OCI-LY7 (cell line): ENCODE measurements at regions of chr2 and their contacts with region 1.

Region 1: GRCh38 chr2:38377050-38377828 is at the start of gene ATL2:
- DNase-seq: peak; percentile 96
- H3K4me3 ChIP-seq: peak within 1 kb of the TSS; percentile 88
- H3K27ac ChIP-seq: peak within 1 kb of the TSS; percentile 69
- H3K4me1 ChIP-seq: peaks cover 65% of the 10 kb centered on the region
- CTCF ChIP-seq: no peak
- total RNA-seq, gene ATL2: 142 and 166 TPM in 2 replicates

Region 2: DNA sequence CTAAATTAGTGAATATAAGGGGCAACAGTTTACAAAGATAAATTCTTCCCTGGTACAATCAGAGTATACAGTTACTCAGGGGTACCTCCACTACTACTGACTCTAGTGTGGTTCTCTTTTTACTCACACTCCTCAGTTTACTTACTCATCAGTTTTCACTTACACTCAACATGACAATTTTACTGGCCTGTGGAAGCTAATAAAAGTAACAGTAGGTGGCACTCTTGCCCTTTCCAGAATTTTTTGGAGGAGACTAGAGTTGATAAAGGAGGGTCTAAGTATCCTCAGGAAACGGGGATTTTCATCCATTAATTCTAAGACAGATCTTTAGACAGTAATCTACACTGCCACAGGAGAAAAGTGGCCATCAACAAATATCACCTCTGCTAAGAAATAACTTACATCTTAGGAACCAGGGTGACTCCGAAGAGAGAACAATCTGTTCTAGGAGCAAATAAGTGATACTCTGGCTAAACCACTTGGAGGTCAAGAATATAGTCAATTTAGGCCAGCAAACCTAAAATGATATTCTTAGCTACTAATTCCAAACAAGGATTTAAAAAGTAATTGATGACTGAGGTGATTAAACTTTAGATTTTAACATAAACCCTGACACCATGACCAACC is 61.4 kb before region 1 on chr2:
- CTCF ChIA-PET with region 1: no interaction called
- POLR2A ChIA-PET with region 1: interaction called, 6 read pairs
- intact Hi-C with region 1: loop called (anchors 2 kb)
- DNase-seq: peak; percentile 63
- H3K4me3 ChIP-seq: no peak overlapping the region
- H3K27ac ChIP-seq: no peak overlapping the region
- H3K4me1 ChIP-seq: no peaks in the 10 kb centered on the region
- CTCF ChIP-seq: peak; percentile 91

Region 3: DNA sequence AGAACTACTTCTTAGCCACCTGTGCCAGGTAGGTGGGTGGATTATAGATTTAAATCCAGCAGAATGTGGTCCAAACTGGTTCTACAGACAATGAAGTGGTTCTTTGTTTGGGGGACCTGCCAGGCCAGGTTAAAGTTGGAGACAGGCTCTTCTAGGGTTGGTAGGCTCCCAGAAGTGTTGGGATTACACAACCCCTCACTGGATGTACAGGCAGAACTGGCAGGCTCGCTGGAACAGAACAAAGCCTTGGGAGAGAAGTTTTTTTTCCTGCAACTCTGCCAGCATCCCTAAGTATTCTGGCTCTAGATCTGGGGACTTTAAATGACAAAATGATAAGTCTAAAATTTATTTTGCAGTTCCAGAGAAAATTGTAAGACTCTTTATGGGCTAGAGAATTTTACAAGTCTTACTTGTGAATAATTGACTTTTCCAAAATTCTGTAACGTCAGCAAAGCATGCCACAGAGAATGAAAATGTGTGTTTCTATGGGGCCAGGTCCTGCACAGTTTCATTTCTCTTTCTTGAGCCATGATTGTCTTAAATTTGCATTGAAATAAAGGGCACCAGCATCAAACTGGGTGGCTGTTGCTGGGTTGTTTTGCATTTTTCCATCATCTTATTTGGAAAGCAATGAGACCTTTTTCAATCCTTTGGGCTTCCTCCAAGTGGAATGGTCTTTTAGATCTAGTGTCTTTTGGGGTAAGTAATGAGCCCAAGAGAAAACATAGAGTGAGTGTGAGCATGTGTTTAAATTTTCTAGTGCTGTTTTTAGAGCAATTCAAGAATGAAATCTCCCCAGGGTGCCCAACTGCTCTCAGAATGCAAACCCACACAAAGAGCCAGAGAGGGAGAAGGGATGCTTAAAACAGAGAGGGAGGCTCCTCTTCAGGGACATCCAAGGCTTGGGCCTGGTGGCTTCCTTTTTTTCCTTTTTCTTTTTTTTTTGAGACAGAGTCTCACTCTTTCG is 32.2 kb after region 1 on chr2:
- CTCF ChIA-PET with region 1: interaction called, 9 read pairs
- POLR2A ChIA-PET with region 1: interaction called, 12 read pairs
- intact Hi-C with region 1: loop called (anchors 1 kb)
- DNase-seq: peak; percentile 87
- H3K4me3 ChIP-seq: peak overlapping the region; percentile 63
- H3K27ac ChIP-seq: peak overlapping the region; percentile 100
- H3K4me1 ChIP-seq: peaks cover 57% of the 10 kb centered on the region
- CTCF ChIP-seq: no peak

Region 4: GRCh38 chr2:38417745-38418689 is 40.8 kb after region 1 on chr2:
- CTCF ChIA-PET with region 1: interaction called, 3 read pairs
- POLR2A ChIA-PET with region 1: interaction called, 5 read pairs
- intact Hi-C with region 1: loop called (anchors 2 kb)
- DNase-seq: peak; percentile 63
- H3K4me3 ChIP-seq: no peak overlapping the region
- H3K27ac ChIP-seq: peak overlapping the region; percentile 93
- H3K4me1 ChIP-seq: peaks cover 59% of the 10 kb centered on the region
- CTCF ChIP-seq: no peak

Region 5: GRCh38 chr2:38465789-38466127 is 88.5 kb after region 1 on chr2:
- CTCF ChIA-PET with region 1: interaction called, 8 read pairs
- POLR2A ChIA-PET with region 1: interaction called, 6 read pairs
- intact Hi-C with region 1: loop called (anchors 1 kb)
- DNase-seq: peak; percentile 88
- H3K4me3 ChIP-seq: no peak overlapping the region
- H3K27ac ChIP-seq: peak overlapping the region; percentile 13
- H3K4me1 ChIP-seq: peaks cover 24% of the 10 kb centered on the region
- CTCF ChIP-seq: peak; percentile 90

Region 6: GRCh38 chr2:38508311-38509039 is 131.2 kb after region 1 on chr2:
- CTCF ChIA-PET with region 1: interaction called, 4 read pairs
- POLR2A ChIA-PET with region 1: interaction called, 4 read pairs
- intact Hi-C with region 1: loop called (anchors 2 kb)
- DNase-seq: peak; percentile 94
- H3K4me3 ChIP-seq: no peak overlapping the region
- H3K27ac ChIP-seq: no peak overlapping the region
- H3K4me1 ChIP-seq: peaks cover 12% of the 10 kb centered on the region
- CTCF ChIP-seq: peak; percentile 98

Region 7: GRCh38 chr2:38527338-38528007 is 150.2 kb after region 1 on chr2:
- CTCF ChIA-PET with region 1: no interaction called
- POLR2A ChIA-PET with region 1: no interaction called
- intact Hi-C with region 1: no loop called
- DNase-seq: no peak
- H3K4me3 ChIP-seq: peak overlapping the region; percentile 44
- H3K27ac ChIP-seq: peak overlapping the region; percentile 84
- H3K4me1 ChIP-seq: peaks cover 82% of the 10 kb centered on the region
- CTCF ChIP-seq: no peak